ENCODE measurements at regions of chr17 and their contacts with region 1.

Region 1: DNA sequence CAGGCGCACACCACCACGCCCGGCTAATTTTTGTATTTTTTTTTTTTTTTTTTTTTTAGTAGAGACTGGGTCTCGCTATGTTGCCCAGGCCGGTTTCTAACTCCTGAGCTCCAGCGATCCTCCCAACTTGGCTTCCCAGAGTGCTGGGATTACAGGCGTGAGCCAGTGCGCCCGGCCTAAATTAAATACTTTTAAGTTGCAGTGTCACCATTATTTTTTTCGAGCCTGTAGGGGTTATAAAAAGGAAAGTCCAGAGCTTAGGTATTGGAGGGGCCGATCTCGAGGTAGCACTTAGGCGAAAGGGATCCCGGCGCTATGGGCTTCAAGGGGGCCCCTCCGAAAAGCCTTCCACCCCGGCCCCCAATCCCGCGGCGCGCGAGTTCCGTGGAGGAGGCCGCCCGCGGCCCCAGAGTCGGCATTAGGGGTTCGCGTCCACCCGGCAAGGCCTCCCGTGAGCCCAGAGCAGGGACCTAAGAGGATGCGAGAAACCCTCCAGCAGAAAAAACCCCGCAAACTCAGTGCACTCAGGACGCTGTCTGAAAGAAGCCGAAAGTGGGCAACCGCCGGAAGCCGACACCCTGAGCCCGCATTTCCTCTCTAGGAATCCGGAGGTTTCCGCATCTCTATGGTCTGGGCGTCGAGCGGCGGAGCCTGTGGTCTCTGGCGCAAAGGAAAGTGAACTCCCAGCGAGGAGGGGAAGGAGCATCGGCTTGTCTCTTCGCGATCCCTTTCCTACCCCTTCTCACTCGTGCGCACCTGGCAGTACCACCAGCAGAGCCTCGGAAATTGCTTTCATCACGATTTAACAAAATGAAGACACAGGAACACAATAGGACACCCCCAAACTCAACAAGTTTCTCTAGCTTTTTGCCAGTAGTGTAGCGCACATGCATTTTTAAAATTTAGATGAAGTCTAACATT is 14.1 kb upstream of the RGS9 start:
- DNase-seq: peak; percentile 89
- ATAC-seq: peak; percentile 69
- H3K4me3 Mint-ChIP-seq: peak overlapping the region; percentile 70
- H3K27ac Mint-ChIP-seq: peak overlapping the region; percentile 98
- H3K4me1 Mint-ChIP-seq: peaks cover 22% of the 10 kb centered on the region
- H3K27me3 Mint-ChIP-seq: peaks cover 6% of the 10 kb centered on the region

Region 2: GRCh38 chr17:64661976-64662773 is 460.9 kb before region 1 on chr17 and contains the start of gene SMURF2:
- CTCF ChIA-PET with region 1: no interaction called
- POLR2A ChIA-PET with region 1: no interaction called
- intact Hi-C with region 1: loop called in 1 of 2 experiments (anchors 5 kb)
- DNase-seq: peak; percentile 89
- ATAC-seq: peak; percentile 82
- H3K4me3 Mint-ChIP-seq: peak within 1 kb of the TSS; percentile 98
- H3K27ac Mint-ChIP-seq: peak within 1 kb of the TSS; percentile 92
- H3K4me1 Mint-ChIP-seq: peaks cover 27% of the 10 kb centered on the region
- H3K27me3 Mint-ChIP-seq: no peaks in the 10 kb centered on the region
- total RNA-seq, gene SMURF2: 13.9 to 15.0 TPM

Region 3: GRCh38 chr17:65027305-65027704 is 95.8 kb before region 1 on chr17:
- CTCF ChIA-PET with region 1: interaction called, 4 read pairs
- POLR2A ChIA-PET with region 1: no interaction called
- intact Hi-C with region 1: loop called (anchors 1 to 5 kb)
- DNase-seq: peak; percentile 75
- ATAC-seq: peak; percentile 72
- H3K4me3 Mint-ChIP-seq: peak overlapping the region; percentile 60
- H3K27ac Mint-ChIP-seq: peak overlapping the region; percentile 91
- H3K4me1 Mint-ChIP-seq: peaks cover 81% of the 10 kb centered on the region
- H3K27me3 Mint-ChIP-seq: no peaks in the 10 kb centered on the region

Region 4: DNA sequence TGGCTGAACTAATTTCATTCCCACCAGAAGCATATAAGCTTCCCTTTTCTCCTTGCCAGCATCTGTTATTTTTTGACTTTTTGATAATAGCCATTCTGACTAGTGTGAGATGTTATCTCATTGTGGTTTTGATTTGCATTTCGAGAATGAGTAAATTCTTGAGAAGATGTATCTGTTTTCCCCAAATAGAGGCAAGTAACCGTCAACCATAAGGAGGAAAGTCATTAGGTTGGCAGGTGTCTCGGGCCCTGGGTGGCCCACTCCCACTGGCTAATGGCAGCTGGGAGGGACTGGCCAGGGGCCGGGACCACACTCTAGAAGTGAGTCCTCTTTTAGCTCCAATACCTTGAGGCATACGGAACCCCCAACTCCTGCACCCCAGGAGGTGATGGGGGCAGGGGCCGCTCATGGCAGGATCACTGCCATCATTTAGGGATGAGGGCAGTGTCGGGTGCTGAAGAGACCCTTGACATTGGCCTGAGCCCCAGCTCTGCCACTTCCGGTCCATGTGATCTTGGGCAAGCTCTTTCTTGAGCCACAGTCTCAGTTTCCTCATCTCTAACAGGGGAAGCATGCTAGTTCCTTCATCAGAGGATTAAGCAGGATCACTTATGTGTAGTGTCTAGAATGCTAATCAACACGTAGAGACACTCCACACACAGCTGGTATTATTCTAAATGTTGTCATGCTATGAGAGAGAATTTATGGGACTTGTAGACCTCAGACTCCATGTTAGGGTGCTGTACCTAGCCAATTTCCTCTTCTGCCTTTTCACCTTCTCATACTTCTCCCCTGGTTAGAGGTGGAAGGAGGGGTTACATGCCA is 58.4 kb after region 1 on chr17:
- CTCF ChIA-PET with region 1: interaction called, 3 read pairs
- POLR2A ChIA-PET with region 1: no interaction called
- intact Hi-C with region 1: loop called (anchors 1 to 5 kb)
- DNase-seq: peak; percentile 71
- ATAC-seq: peak; percentile 77
- H3K4me3 Mint-ChIP-seq: no peak overlapping the region
- H3K27ac Mint-ChIP-seq: peak overlapping the region; percentile 75
- H3K4me1 Mint-ChIP-seq: peaks cover 54% of the 10 kb centered on the region
- H3K27me3 Mint-ChIP-seq: peaks cover 9% of the 10 kb centered on the region

Region 5: GRCh38 chr17:65198653-65199382 is 75.7 kb after region 1 on chr17:
- CTCF ChIA-PET with region 1: no interaction called
- POLR2A ChIA-PET with region 1: no interaction called
- intact Hi-C with region 1: loop called in 1 of 2 experiments (anchors 5 kb)
- DNase-seq: no peak
- ATAC-seq: peak; percentile 70
- H3K4me3 Mint-ChIP-seq: no peak overlapping the region
- H3K27ac Mint-ChIP-seq: no peak overlapping the region
- H3K4me1 Mint-ChIP-seq: peaks cover 15% of the 10 kb centered on the region
- H3K27me3 Mint-ChIP-seq: no peaks in the 10 kb centered on the region